GM18951 (cell line): ENCODE measurements at regions of chr5 and their contacts with region 1.

Region 1: GRCh38 chr5:157120102-157120501 is 11.3 kb upstream of the HAVCR2 start:
- POLR2A ChIP-seq: no peak

Region 2: DNA sequence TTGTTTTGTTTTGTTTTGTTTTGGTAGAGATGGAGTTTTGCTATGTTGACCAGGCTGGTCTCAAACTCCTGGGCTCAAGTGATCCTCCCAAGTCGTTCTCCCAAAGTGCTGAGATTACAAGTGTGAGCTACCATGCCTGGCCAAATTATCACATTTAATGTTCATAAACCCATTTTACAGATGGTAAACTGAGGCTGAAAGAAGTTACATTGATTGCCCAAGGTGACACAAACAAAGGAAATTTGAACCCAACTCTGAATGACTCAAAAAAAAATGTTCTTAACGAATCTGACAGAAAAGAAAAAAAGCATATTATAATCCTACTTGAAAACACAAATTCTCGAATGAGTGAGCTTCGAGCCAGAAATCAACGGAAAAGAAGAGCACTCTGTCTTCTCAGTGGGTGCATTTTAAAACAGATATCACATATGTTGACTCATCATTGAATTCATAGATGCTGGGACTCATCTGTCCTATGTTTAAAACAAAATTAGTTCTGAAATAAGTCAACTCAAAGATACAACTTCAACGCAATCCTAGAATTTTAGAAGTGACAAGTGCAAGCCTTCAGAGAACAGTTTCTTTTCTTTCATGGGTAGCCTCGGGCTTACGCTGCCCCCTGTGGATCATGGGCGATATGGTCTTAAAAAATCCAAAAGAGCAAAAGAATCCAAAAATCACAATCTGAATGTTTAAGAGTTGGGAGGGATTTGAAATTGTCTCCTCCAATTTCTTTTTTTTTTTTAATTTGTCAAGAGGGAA is 185.5 kb before region 1 on chr5:
- in situ Hi-C with region 1: loop called (anchors 10 kb)
- POLR2A ChIP-seq: no peak